Activated T-helper 1 cell treated with anti-CD3 and anti-CD28 coated beads, Interleukin-12 subunit alpha, Interleukin-12 subunit beta, Interleukin-2, Interleukin-4 antibody, amounts not matched to agents 30 ng/mL and 10 ng/mL and 1 ng/mL, durations not matched to agents 14 hours and 24 hours and 36 hours (primary cell): ENCODE measurements at regions of chr6 and their contacts with region 1.

Region 1: DNA sequence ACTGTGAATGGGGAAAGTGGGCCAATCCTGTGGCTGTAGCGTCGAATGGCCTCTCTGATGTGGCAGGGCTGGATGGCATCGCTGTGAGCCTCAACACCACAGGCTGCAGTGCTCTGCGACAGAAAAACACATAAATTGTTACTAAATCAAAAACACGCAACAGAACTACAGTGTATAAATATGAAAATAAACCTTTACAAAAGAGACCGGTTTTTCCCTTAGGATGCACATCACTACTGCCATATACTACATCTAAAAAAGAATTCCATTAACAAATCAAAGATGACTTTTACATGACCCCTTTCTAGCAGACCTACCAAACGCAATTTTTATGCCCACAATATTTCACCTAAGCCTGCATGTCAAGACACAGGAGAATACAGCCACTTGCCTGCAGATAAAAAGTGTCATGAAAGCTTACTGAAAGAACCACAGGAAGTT is 395.5 kb upstream of the RUNX2 start:
- DNase-seq: no peak
- H3K4me3 Mint-ChIP-seq: peak overlapping the region; percentile 79
- H3K27ac Mint-ChIP-seq: peak overlapping the region; percentile 94
- H3K4me1 Mint-ChIP-seq: peaks cover 56% of the 10 kb centered on the region
- H3K27me3 Mint-ChIP-seq: no peaks in the 10 kb centered on the region

Region 2: DNA sequence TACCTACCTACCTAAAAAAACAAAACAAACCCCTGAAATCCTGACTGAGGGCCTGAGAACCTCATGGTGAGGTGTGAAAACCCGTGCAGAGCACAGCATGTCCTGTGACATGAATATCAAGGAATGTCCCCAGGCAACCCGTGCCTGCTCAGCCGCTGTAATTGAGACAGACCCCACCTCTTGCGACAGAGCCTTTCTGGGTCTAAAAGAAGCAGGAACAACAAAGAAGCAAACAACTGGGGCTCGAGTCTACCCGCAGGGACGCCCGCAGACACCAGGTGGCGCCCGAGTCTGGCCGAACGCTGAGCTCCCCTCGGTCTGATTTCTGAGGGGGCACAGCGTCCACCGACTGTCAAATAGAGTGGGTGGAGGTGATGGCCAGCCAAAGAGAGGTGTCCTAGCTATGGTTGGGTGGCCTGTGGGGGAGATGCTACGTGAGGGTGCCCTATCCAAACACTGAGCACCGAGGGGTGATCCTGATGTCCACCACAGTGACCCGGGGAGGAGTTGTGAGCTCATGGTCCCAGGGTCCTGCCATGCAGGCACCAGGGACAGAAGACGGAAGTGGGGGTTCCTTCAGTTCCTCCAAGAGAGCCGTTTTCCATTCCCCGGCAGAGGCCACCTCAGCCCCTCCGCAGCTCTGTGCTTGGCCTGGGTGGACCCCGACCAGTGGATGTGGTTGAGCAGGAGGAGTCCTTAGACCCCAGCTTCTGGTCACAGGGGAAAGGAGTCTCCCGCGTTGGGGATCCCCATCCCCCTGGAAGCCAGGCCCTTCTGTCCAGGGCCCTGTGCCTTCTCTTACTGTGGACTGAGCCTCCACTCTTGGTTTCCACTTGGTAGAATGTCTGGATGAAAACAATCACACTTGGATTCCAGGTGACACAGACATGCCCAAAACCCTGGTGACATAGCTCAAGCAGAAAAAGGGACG is 277.0 kb before region 1 on chr6:
- intact Hi-C with region 1: loop called (anchors 10 kb)
- DNase-seq: peak; percentile 47
- H3K4me3 Mint-ChIP-seq: no peak overlapping the region
- H3K27ac Mint-ChIP-seq: peak overlapping the region; percentile 8
- H3K4me1 Mint-ChIP-seq: peaks cover 8% of the 10 kb centered on the region
- H3K27me3 Mint-ChIP-seq: peaks cover 4% of the 10 kb centered on the region

Region 3: DNA sequence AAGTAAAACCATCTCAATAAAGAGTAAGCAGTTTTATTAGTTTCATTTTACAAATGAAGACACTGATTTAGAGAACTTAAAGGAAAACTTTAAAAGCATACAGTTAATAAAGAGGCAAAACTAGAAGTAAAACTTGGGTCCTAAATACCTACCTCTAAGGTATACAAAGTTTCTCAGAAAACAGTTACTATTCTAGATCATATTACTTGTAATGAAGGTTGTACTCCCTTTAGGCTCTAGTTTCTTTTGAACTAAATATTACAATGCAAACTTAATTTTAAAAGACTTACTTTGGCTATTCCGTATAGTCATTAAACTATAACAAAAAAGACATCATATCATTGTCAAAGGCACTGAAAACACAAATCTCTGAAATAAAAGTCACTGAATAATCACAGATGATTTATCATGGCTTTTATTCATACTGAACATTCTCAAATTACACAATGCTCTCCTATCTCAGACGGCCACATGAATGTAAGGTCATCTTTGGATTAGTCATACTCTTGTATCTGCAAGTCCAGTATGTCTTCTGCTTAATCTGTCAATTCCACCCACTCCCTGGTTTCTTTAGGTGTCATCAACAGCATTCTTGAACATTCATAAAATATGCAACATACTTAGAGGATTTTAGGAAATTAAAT is 33.9 kb after region 1 on chr6:
- intact Hi-C with region 1: no loop called
- DNase-seq: no peak
- H3K4me3 Mint-ChIP-seq: no peak overlapping the region
- H3K27ac Mint-ChIP-seq: no peak overlapping the region
- H3K4me1 Mint-ChIP-seq: peaks cover 22% of the 10 kb centered on the region
- H3K27me3 Mint-ChIP-seq: no peaks in the 10 kb centered on the region

Region 4: DNA sequence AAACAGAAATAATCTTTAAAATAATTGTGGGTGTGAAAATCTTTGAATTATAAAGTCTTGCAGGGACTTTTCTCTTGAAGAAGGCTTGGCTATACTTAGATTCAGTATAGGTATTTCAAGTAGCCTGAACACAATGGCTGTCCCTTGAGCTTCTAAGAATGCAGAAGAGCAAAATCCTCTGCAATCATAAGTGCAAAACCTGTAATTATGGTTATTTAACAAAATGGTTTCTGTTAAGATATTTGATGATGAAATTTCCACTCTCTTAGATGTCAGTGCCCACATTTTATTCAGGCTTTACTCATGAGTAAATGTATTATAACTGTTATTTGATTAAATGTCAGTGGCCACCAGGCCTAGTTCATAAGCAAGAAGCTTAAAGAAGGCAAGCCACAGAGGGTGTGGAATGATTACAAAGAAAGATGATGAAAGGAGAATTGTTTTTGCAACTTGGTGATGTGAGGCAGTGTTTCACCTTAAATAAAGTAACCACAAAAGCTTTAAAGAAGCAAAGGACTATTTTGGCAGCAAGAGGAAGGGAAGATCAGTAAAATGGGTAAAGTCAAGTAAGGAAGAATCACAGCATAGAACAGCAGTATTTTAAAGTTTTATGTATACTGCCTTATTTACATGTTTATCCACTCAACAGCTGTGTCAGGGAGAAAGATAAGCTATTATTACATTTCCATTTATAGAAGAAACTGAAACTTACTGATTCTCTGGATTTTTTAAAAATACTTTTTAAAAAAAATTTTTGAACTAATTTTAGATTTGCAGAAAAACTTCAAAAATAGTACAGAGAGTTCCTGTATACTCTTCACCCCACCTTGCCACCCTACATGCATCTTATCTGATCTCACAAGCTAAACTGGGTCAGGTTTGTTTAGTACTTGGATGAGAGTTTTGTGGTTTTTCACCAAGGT is 44.3 kb after region 1 on chr6:
- intact Hi-C with region 1: loop called (anchors 2 kb)
- DNase-seq: no peak
- H3K4me3 Mint-ChIP-seq: peak overlapping the region; percentile 4
- H3K27ac Mint-ChIP-seq: peak overlapping the region; percentile 84
- H3K4me1 Mint-ChIP-seq: peaks cover 43% of the 10 kb centered on the region
- H3K27me3 Mint-ChIP-seq: no peaks in the 10 kb centered on the region

Region 5: GRCh38 chr6:45049188-45049843 is 116.6 kb after region 1 on chr6:
- intact Hi-C with region 1: no loop called
- DNase-seq: no peak
- H3K4me3 Mint-ChIP-seq: no peak overlapping the region
- H3K27ac Mint-ChIP-seq: no peak overlapping the region
- H3K4me1 Mint-ChIP-seq: peaks cover 25% of the 10 kb centered on the region
- H3K27me3 Mint-ChIP-seq: no peaks in the 10 kb centered on the region

Region 6: DNA sequence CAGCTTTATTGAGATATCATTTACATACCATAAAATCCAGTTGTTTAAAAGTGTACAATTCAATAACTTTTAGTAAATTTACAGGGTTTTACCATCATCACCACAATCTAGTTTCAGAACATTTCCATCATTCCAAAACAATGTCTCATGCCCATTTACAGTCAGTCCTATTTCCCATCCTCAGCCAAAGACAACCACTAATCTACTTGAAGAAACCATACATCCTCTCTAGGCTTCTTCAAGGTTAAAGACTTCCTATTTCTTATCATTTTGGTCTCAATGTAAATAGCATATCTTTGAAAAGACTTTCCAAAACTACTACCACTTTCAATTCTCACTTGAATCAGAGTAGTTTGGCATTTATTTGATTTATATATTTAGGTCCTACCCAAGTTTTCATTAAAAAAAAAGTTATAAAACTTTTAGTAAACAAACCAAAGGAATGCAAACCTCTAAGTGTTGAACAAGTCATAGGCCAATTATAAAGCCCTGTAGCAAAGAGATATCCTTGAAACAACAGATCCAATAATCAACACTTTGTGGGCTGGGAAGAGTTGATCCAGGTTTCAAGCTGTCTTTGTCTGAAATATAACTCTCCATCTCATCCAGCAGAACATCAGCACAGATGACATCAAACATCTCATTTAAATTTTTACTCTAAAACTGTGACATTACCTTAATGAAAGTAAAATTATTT is 184.2 kb after region 1 on chr6:
- intact Hi-C with region 1: loop called (anchors 5 kb)
- DNase-seq: no peak
- H3K4me3 Mint-ChIP-seq: no peak overlapping the region
- H3K27ac Mint-ChIP-seq: peak overlapping the region; percentile 47
- H3K4me1 Mint-ChIP-seq: peaks cover 24% of the 10 kb centered on the region
- H3K27me3 Mint-ChIP-seq: no peaks in the 10 kb centered on the region

Region 7: GRCh38 chr6:45741437-45742171 is 808.9 kb after region 1 on chr6:
- intact Hi-C with region 1: loop called (anchors 5 kb)
- DNase-seq: no peak
- H3K4me3 Mint-ChIP-seq: peak overlapping the region; percentile 2
- H3K27ac Mint-ChIP-seq: peak overlapping the region; percentile 27
- H3K4me1 Mint-ChIP-seq: peaks cover 44% of the 10 kb centered on the region
- H3K27me3 Mint-ChIP-seq: peaks cover 3% of the 10 kb centered on the region